ENCODE measurements at regions of chr14 and their contacts with region 1.

Region 1: GRCh38 chr14:105490572-105491366 is at the start of gene TEDC1:
- DNase-seq: peak; percentile 100
- H3K4me3 Mint-ChIP-seq: peak within 1 kb of the TSS; percentile 89
- H3K27ac Mint-ChIP-seq: peak within 1 kb of the TSS; percentile 95
- H3K4me1 Mint-ChIP-seq: peaks cover 18% of the 10 kb centered on the region
- H3K27me3 Mint-ChIP-seq: no peaks in the 10 kb centered on the region
- total RNA-seq, gene TEDC1: 41.4 and 43.3 TPM in 2 replicates

Region 2: GRCh38 chr14:103715052-103716000 is 1775.4 kb before region 1 on chr14 and contains the starts of genes XRCC3 and ZFYVE21:
- intact Hi-C with region 1: loop called (anchors 2 kb)
- DNase-seq: peak; percentile 100
- H3K4me3 Mint-ChIP-seq: peak within 1 kb of the TSS; percentile 94
- H3K27ac Mint-ChIP-seq: peak within 1 kb of the TSS; percentile 93
- H3K4me1 Mint-ChIP-seq: peaks cover 37% of the 10 kb centered on the region
- H3K27me3 Mint-ChIP-seq: no peaks in the 10 kb centered on the region
- total RNA-seq, gene XRCC3: 70.3 and 75.8 TPM in 2 replicates
- total RNA-seq, gene ZFYVE21: 21.4 and 23.9 TPM in 2 replicates

Region 3: GRCh38 chr14:105086833-105087307 is 403.9 kb before region 1 on chr14:
- intact Hi-C with region 1: loop called (anchors 5 kb)
- DNase-seq: peak; percentile 94
- H3K4me3 Mint-ChIP-seq: peak overlapping the region; percentile 81
- H3K27ac Mint-ChIP-seq: no peak overlapping the region
- H3K4me1 Mint-ChIP-seq: peaks cover 11% of the 10 kb centered on the region
- H3K27me3 Mint-ChIP-seq: peaks cover 19% of the 10 kb centered on the region

Region 4: DNA sequence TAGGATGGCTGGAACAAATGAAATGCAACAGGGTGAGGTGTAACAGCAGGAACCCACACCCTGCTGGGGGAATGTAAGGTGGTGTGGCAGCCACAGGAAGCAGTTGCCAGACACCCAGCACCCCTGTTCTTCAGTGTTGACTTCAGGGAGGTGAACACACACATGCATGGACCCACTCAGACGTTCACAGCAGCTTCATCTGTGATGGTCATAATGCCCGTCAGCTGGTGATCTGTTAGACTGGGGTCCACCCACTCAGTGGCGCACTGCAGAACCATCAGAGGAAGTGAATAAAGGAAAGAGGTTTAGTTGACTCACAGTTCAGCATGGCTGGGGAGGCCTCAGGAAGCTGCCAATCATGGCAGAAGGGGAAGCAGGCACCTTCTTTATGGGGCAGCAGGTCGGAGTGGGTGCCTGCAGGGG is 115.1 kb before region 1 on chr14:
- intact Hi-C with region 1: loop called (anchors 1 kb)
- DNase-seq: peak; percentile 75
- H3K4me3 Mint-ChIP-seq: peak overlapping the region; percentile 46
- H3K27ac Mint-ChIP-seq: peak overlapping the region; percentile 87
- H3K4me1 Mint-ChIP-seq: peaks cover 13% of the 10 kb centered on the region
- H3K27me3 Mint-ChIP-seq: no peaks in the 10 kb centered on the region

Region 5: DNA sequence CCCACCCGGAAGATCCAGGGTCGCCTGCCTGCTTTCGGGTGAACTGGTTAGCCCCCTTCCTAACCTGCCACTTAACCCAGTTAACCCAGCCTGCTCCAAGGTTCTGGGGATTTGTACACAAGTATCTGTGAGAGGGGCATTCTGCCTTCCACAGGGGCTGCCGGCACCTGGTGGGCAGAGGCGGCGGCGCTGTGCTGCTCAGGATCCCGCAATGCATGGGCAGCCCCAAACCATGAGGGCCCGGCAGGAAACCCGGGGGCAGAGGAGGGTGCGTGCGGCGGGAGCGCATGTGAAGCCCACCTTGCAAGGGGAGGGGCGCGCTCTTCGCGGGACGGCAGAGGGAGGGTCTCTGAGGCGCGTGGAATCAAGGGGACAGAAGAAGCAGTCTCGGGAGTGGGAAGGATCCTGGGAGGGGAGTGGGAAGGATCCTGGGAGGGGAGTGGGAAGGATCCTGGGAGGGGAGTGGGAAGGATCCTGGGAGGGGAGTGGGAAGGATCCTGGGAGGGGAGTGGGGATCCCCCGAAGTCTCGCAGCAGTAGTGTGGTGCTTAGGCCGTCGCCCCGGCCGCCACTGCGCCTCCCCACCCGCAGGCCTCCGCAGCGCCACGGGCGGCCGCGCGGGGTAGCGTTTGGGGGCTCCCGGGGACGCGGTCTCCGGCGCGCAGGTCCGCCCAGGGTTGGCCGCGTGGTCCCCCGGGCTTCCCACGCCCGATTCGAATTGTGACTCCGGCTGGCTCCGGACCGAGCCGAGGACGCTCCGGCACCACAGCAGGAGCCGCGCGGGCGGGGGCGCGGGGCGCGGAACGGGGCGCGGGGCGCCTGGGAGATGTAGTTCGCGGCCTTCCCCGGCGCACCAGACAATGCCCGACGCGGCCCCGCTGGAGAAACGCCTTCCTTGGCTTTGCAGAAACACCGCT is 76.1 kb before region 1 on chr14:
- intact Hi-C with region 1: loop called (anchors 2 kb)
- DNase-seq: peak; percentile 91
- H3K4me3 Mint-ChIP-seq: peak overlapping the region; percentile 68
- H3K27ac Mint-ChIP-seq: peak overlapping the region; percentile 48
- H3K4me1 Mint-ChIP-seq: peaks cover 10% of the 10 kb centered on the region
- H3K27me3 Mint-ChIP-seq: peaks cover 22% of the 10 kb centered on the region

Region 6: GRCh38 chr14:105448706-105449111 is 42.1 kb before region 1 on chr14:
- intact Hi-C with region 1: no loop called
- DNase-seq: peak; percentile 90
- H3K4me3 Mint-ChIP-seq: no peak overlapping the region
- H3K27ac Mint-ChIP-seq: no peak overlapping the region
- H3K4me1 Mint-ChIP-seq: no peaks in the 10 kb centered on the region
- H3K27me3 Mint-ChIP-seq: no peaks in the 10 kb centered on the region

Region 7: DNA sequence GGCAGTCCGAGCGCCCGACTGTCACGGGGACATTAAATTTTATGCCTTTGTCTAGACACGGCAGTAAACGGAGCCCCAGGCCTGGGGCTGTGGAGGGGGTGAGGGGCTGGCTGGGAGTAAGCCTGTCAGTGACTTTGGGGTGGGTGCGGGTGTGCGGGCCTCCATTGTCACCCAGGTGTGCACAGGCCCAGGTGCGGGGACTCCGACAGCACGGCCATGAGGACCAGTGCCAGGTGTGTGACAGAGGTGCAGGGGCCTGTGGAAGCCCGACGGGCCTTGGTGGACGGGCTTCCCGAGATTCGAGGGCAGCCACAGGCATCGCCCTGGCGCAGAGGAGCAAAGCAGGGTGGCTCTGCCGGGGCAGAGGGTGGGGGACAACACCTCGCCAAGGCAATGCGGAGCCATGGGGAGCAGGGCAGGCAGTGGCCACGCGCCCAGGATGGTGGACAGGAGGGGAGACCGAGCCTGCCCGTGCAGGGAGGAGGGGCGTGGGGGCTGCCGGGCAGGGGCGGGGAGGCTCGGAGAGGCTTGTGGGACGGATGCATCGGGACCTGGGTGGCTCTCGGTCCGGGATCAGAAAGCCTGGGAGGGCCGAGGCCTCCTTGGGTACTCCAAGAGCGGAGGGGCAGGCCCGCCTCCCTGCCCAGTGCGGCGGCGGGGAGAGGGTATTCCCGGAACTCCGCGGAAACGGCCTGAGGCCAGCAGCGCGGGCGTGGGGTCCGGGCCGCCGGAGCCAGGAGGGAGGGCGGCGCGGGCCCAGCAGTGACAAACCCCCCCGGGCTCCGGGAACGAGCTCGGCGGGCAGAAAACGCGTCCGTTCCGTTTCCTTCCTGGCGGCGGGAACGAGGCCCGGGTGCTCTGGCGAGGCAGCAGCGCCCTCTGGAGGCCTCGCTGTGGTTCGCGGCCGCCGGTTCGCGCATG is 37.2 kb after region 1 on chr14:
- intact Hi-C with region 1: loop called (anchors 2 kb)
- DNase-seq: peak; percentile 96
- H3K4me3 Mint-ChIP-seq: peak overlapping the region; percentile 84
- H3K27ac Mint-ChIP-seq: peak overlapping the region; percentile 77
- H3K4me1 Mint-ChIP-seq: peaks cover 12% of the 10 kb centered on the region
- H3K27me3 Mint-ChIP-seq: peaks cover 26% of the 10 kb centered on the region

Region 8: DNA sequence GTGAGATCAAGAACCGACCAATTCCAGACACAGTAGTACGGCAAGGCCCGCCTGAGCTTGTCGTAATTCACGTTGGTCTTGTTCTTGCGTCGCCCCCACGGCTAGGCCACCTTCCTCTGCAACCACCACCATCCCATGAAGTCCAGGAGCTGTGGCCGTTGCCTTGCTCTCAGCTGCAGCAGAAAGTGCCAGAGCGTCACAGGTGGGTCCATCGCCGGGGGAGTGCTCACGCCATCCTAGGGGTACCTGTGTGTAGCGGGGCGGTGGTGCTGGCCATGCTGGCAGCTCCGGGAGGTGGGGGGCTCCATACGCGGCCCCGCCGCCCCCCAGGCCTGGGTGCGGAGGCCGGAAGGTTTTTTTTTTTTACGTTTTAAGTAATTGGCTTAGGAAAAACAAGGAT is 58.7 kb after region 1 on chr14:
- intact Hi-C with region 1: no loop called
- DNase-seq: no peak
- H3K4me3 Mint-ChIP-seq: no peak overlapping the region
- H3K27ac Mint-ChIP-seq: no peak overlapping the region
- H3K4me1 Mint-ChIP-seq: no peaks in the 10 kb centered on the region
- H3K27me3 Mint-ChIP-seq: peaks cover 14% of the 10 kb centered on the region

Region 9: DNA sequence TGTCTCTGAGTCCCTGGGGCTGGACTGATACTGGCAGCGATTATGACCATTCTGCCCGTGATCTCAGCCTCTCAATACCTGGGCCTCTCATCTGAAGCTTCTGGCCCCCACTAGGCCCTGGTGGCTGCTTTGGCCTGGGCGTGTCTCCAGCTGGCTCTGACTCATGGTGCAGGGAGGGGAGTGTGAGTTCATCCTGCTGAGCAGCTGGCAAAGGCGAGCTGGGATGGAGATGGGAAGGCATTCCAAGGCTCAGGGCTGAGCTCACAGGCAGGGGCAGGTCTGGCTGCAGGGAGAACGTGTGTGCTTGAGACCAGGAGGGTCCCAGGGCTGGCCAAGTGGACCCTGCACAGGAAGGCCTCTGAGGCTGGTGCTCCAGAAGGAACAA is 257.4 kb after region 1 on chr14:
- intact Hi-C with region 1: no loop called
- DNase-seq: no peak
- H3K4me3 Mint-ChIP-seq: no peak overlapping the region
- H3K27ac Mint-ChIP-seq: no peak overlapping the region
- H3K4me1 Mint-ChIP-seq: peaks cover 1% of the 10 kb centered on the region
- H3K27me3 Mint-ChIP-seq: no peaks in the 10 kb centered on the region